ENCODE measurements at regions of chr2 and their contacts with region 1.

Region 1: GRCh38 chr2:219160186-219161017 is at the start of gene NHEJ1:
- DNase-seq: peak; percentile 91 to 95 (median 92)
- ATAC-seq: peak; percentile 98
- H3K4me3 ChIP-seq: peak within 1 kb of the TSS; percentile 55
- H3K27ac ChIP-seq: peak within 1 kb of the TSS; percentile 76
- H3K4me1 ChIP-seq: peaks cover 8 to 16% of the 10 kb centered on the region in 2 experiments; a peak in 4 of 5 replicates
- H3K27me3 ChIP-seq: no peaks in the 10 kb centered on the region
- CTCF ChIP-seq: peak; percentile 76 to 89 (median 89)
- EP300 ChIP-seq: no peak
- POLR2A ChIP-seq: peak; percentile 85
- RAD21 ChIP-seq: peak; percentile 71 to 81
- polyA plus RNA-seq, gene NHEJ1: 16.5 to 23.7 TPM

Region 2: DNA sequence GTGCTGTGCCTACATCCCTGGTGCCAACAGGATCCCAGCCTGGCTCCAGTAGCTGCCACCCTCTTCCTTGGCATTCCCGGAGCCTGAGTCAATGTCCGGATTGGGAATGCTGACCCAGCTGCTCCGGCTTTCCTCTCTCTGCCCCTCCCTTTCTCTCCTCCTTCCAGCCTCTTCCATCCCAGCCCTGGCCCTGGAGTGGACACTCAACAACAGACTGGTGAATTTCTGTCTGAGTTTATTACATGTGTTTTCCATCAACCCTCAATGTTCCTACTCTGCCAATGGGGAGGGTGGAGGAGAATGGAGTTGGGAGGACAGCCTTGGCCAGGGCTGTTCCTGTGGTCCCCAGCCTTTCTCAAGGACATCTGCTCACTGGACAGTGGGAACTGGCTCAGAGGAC is 327.9 kb before region 1 on chr2:
- CTCF ChIA-PET with region 1: no interaction called
- POLR2A ChIA-PET with region 1: no interaction called
- in situ Hi-C with region 1: no loop called
- intact Hi-C with region 1: no loop called
- DNase-seq: no peak
- ATAC-seq: no peak
- H3K4me3 ChIP-seq: no peak overlapping the region
- H3K27ac ChIP-seq: no peak overlapping the region
- H3K4me1 ChIP-seq: peaks cover 0 to 10% of the 10 kb centered on the region in 2 experiments; a peak in 1 of 5 replicates
- H3K27me3 ChIP-seq: peaks cover 2 to 62% of the 10 kb centered on the region in 2 experiments; a peak in 3 of 5 replicates
- CTCF ChIP-seq: no peak
- EP300 ChIP-seq: no peak
- POLR2A ChIP-seq: no peak
- RAD21 ChIP-seq: no peak

Region 3: DNA sequence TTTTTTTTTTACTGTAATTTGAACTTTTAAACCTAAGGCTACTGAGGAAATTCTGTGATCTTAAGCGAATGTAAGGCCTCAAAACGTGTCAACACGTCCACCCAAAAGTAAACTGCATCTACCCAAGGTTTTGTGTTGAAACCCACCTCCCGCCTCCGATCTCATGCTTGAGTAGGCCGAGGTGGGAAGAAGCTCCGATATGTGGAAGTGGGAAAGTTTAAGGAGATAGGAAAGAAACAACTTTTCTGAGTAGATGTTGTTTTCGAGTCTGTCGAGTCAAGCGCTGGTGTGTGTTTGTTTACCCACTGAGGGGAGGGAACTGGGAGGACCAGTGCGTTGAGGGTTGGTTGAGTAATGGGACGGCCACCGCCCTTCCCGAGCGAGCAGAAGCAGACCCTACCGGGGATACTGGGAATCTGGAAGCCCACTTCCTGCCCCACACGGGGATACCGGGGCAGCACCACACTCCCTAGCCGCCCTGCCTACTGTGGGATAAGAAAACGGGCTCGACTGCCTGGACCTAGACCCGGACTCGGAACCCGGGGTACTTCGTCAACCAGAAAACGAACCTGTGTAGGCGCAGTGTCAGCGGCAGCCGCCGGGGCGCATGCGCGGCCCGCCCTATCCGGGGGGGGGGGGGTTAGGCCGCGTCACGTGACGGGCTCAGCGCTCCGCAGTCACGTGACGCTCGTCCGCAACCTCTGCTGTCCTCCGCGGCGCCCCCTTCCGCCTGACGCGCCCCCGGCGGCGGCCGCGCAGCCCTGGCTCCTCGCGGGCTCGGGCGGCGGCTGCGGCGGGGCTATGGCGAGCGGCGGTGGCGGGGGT is 17.4 kb after region 1 on chr2 and contains the start of gene RETREG2:
- CTCF ChIA-PET with region 1: no interaction called
- POLR2A ChIA-PET with region 1: interaction called, 3 read pairs
- in situ Hi-C with region 1: no loop called
- intact Hi-C with region 1: loop called (anchors 1 kb)
- DNase-seq: peak; percentile 89 to 96 (median 93)
- ATAC-seq: peak; percentile 86
- H3K4me3 ChIP-seq: peak within 1 kb of the TSS; percentile 80
- H3K27ac ChIP-seq: peak within 1 kb of the TSS; percentile 97
- H3K4me1 ChIP-seq: peaks cover 9 to 25% of the 10 kb centered on the region in 2 experiments; a peak in 4 of 5 replicates
- H3K27me3 ChIP-seq: no peaks in the 10 kb centered on the region
- CTCF ChIP-seq: peak in 2 of 3 experiments; percentile 42 to 49; a peak in 2 of 6 replicates
- EP300 ChIP-seq: peak; percentile 6; the same call in 1 of the 2 replicates
- POLR2A ChIP-seq: peak; percentile 82
- RAD21 ChIP-seq: no peak
- polyA plus RNA-seq, gene RETREG2: 4.9 to 22.6 TPM

Region 4: DNA sequence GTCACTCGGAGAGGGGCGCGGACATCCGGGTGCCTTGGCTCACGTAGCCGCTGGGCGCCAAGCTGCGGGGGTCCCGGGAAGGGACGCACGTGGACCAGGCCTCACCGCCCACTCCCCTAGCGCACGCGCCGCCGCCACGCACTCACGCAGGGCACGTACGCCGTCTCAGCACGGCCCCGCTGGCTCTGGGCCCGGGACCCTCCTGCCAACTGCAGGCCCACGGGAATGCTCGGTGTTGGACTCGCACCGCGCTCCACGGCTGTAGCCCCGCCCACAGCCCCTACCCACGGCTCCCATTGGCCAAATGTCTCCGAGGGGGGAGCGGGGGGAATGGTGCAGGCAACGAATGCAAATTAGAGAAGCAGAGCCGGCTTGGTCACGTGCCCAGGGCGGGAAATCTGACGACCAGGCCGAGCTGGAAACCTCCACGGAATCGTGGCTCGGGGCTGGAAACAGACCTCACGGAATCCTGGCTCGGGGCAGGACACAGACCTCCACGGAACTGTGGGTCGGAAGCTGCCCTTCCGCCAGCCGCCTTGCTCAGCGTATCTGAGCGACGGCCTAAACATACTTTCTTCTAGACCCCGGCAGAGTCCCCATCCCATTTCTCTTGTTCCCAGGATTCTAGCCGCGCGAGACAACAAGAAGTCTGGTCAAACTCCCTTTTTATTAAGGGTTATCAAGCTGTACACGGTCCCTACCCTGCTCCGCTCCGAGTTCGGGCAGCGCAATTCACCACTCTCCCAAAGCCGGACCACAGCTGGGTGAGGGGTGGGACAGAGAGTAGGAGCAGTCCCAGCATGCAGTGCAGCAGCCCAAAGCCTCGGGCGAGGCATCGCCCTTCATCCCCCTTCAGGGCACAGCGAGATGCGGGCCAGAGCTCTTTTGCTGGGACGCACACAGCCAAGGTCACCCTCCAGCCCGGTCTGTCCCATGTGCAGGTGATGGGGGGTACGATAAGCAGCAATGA is 58.6 kb after region 1 on chr2 and contains the start of gene ABCB6:
- CTCF ChIA-PET with region 1: no interaction called
- POLR2A ChIA-PET with region 1: no interaction called
- in situ Hi-C with region 1: no loop called
- intact Hi-C with region 1: loop called (anchors 2 kb)
- DNase-seq: peak; percentile 82 to 95 (median 90)
- ATAC-seq: peak; percentile 91
- H3K4me3 ChIP-seq: peak within 1 kb of the TSS; percentile 58
- H3K27ac ChIP-seq: peak within 1 kb of the TSS; percentile 89
- H3K4me1 ChIP-seq: peaks cover 13 to 53% of the 10 kb centered on the region in 2 experiments; a peak in 4 of 5 replicates
- H3K27me3 ChIP-seq: no peaks in the 10 kb centered on the region
- CTCF ChIP-seq: no peak
- EP300 ChIP-seq: no peak
- POLR2A ChIP-seq: peak; percentile 84
- RAD21 ChIP-seq: no peak
- polyA plus RNA-seq, gene ABCB6: 3.7 to 8.1 TPM

Region 5: GRCh38 chr2:219294356-219295351 is 134.3 kb after region 1 on chr2:
- CTCF ChIA-PET with region 1: interaction called, 10 read pairs
- POLR2A ChIA-PET with region 1: no interaction called
- in situ Hi-C with region 1: no loop called
- intact Hi-C with region 1: loop called (anchors 1 kb)
- DNase-seq: peak; percentile 89 to 93 (median 92)
- ATAC-seq: peak; percentile 89
- H3K4me3 ChIP-seq: peak overlapping the region; percentile 36
- H3K27ac ChIP-seq: peak overlapping the region; percentile 76
- H3K4me1 ChIP-seq: peaks cover 22 to 57% of the 10 kb centered on the region in 2 experiments; a peak in 4 of 5 replicates
- H3K27me3 ChIP-seq: peaks cover 0 to 4% of the 10 kb centered on the region in 2 experiments; a peak in 2 of 5 replicates
- CTCF ChIP-seq: peak; percentile 93 to 99 (median 98)
- EP300 ChIP-seq: 0 out of 2 replicates have a peak, but pooled peaks have one; percentile 7
- POLR2A ChIP-seq: peak; percentile 72; the same call in 1 of the 2 replicates
- RAD21 ChIP-seq: peak; percentile 81 to 87

Region 6: GRCh38 chr2:219352448-219353023 is 192.1 kb after region 1 on chr2:
- CTCF ChIA-PET with region 1: no interaction called
- POLR2A ChIA-PET with region 1: no interaction called
- in situ Hi-C with region 1: no loop called
- intact Hi-C with region 1: loop called (anchors 1 kb)
- DNase-seq: peak; percentile 59 to 76 (median 66)
- ATAC-seq: peak; percentile 96
- H3K4me3 ChIP-seq: no peak overlapping the region
- H3K27ac ChIP-seq: no peak overlapping the region
- H3K4me1 ChIP-seq: peaks cover 2 to 4% of the 10 kb centered on the region in 2 experiments; a peak in 3 of 5 replicates
- H3K27me3 ChIP-seq: peaks cover 0 to 7% of the 10 kb centered on the region in 2 experiments; a peak in 2 of 5 replicates
- CTCF ChIP-seq: peak; percentile 68 to 76 (median 74)
- EP300 ChIP-seq: no peak
- POLR2A ChIP-seq: no peak
- RAD21 ChIP-seq: peak; percentile 42 to 70

Measured in K562 (cell line).